T-cell (primary cell): ENCODE measurements at regions of chr9 and their contacts with region 1.

Region 1: DNA sequence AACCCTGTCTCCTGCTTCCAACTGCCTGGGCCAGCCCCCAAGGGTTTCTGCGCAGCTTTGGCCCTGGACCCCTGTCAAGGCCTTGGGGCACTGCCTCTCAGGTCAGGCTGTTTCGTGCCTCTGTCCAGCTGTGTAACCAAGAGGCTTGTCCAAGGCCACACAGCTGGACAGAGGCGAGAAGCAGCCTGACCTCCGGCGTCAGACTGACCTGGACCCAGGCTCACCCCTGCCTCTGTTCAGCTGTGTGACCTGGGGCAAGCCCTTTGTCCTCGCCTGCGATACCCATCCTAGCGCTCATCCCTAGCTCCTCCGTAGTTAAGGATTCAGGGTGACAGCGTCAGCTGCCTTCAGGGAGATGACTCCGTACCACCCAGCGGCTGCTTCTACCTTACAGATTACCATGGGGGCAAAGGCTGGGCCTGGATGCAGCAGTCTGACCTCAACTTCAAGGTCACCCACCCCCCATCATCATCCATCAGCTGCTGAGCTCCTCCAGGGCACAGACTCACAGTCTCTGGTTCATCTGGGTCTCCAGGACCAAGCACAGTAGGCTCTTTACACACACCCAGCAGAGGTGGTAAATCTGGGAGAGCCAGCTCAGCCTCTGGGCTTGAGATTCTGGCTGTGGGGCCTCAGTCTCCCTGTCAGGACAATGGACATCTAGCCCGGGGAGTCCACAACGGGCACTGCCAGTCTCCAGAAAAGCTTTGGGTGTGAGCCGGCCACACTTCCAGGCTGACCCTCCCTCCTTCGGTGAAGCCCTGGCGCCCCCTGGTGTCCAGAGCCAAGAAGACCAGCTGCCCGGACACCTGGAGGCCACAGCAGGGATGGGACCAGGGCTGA is 7.9 kb downstream of the AK1 start:
- DNase-seq: peak in 34 of 35 experiments; percentile 39 to 82 (median 60)
- ATAC-seq: peak; percentile 61 to 74 (median 70)
- H3K4me3 ChIP-seq: no peak overlapping the region
- H3K4me3 Mint-ChIP-seq: no peak overlapping the region
- H3K27ac ChIP-seq: no peak overlapping the region
- H3K27ac Mint-ChIP-seq: no peak overlapping the region
- H3K4me1 ChIP-seq: peaks cover 3 to 24% of the 10 kb centered on the region in 2 experiments
- H3K4me1 Mint-ChIP-seq: peaks cover 14 to 18% (median 18%) of the 10 kb centered on the region in 3 donors
- H3K27me3 ChIP-seq: no peaks in the 10 kb centered on the region
- H3K27me3 Mint-ChIP-seq: no peaks in the 10 kb centered on the region

Region 2: DNA sequence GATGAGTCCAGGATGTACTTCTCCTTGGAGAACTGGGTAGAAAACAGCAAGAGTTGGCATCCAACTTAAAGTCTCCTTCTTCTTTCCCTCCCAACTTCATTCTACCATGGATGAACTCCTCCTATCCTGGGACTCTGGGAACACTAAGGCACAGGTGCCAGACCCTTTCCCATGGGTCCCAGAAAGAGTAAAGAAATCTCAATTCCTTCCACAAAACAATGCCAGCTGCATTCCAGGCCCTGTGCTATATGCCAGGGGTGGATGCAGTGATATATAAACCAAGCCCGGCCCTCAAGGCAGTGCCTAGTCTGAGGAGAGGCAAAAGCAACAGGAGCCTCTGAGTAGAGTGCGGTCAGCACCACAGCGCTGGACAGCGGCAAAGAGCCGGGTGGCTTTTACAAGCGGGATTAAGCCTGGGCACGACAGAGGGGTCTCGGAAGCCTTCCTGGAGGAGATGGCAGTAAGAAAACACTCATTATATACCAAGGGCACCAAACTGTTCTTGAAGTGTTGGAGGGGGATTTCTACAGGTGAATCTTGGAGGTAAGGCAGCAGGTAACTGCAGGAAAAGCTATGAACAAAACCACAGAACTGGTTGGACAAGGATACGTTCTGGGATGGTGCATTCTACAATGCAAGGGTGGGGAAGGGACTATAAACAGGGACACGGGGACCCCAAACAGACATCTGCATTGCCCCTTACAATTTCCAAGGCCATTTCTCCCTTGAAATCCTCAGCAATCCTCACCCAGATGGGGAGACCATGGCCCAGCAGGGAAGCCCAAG is 118.1 kb before region 1 on chr9:
- CTCF ChIA-PET with region 1: no interaction called
- POLR2A ChIA-PET with region 1: no interaction called
- DNase-seq: no peak
- ATAC-seq: no peak
- H3K4me3 ChIP-seq: no peak overlapping the region
- H3K4me3 Mint-ChIP-seq: no peak overlapping the region
- H3K27ac ChIP-seq: no peak overlapping the region
- H3K27ac Mint-ChIP-seq: peak overlapping the region in 1 of 2 donors; percentile 52
- H3K4me1 ChIP-seq: peaks cover 0 to 16% of the 10 kb centered on the region in 2 experiments
- H3K4me1 Mint-ChIP-seq: peaks cover 26 to 30% (median 27%) of the 10 kb centered on the region in 3 donors
- H3K27me3 ChIP-seq: no peaks in the 10 kb centered on the region
- H3K27me3 Mint-ChIP-seq: no peaks in the 10 kb centered on the region

Region 3: GRCh38 chr9:127802576-127803443 is 66.7 kb before region 1 on chr9 and contains the start of gene FPGS:
- CTCF ChIA-PET with region 1: interaction called in 1 of 2 experiments, 14 read pairs
- POLR2A ChIA-PET with region 1: no interaction called
- DNase-seq: peak; percentile 64 to 89 (median 78)
- ATAC-seq: peak; percentile 86 to 90 (median 87)
- H3K4me3 ChIP-seq: peak within 1 kb of the TSS; percentile 84 to 91
- H3K4me3 Mint-ChIP-seq: peak within 1 kb of the TSS; percentile 92 to 95 (median 93)
- H3K27ac ChIP-seq: peak within 1 kb of the TSS; percentile 79
- H3K27ac Mint-ChIP-seq: peak within 1 kb of the TSS; percentile 89 to 93
- H3K4me1 ChIP-seq: peaks cover 4 to 30% of the 10 kb centered on the region in 2 experiments
- H3K4me1 Mint-ChIP-seq: peaks cover 19 to 31% (median 29%) of the 10 kb centered on the region in 3 donors
- H3K27me3 ChIP-seq: no peaks in the 10 kb centered on the region
- H3K27me3 Mint-ChIP-seq: no peaks in the 10 kb centered on the region
- total RNA-seq, gene FPGS: 78.4 to 151 (median 139) TPM

Region 4: DNA sequence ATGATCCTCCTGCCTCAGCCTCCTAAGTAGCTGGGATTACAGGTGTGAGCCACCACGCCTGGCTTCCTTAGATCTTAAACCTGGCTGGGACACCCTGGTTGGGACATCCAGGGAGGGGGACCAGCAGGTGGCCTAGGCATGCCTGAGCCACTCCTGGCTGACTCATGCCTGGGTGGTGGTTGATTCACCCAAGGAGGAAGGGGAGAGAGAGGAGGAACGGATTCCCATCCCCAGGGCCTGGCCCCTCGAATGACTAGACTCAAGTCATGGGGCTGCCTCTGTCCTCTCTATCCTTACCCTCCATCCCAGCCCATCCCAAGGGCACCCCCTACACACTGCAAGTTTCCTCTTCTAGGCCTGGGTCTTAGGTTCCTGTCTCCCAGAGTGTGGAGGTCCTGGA is 98.5 kb after region 1 on chr9:
- CTCF ChIA-PET with region 1: interaction called in 1 of 2 experiments, 10 read pairs
- POLR2A ChIA-PET with region 1: no interaction called
- DNase-seq: peak in 1 of 35 experiments; percentile 56
- ATAC-seq: no peak
- H3K4me3 ChIP-seq: peak overlapping the region in 1 of 2 donors; percentile 0
- H3K4me3 Mint-ChIP-seq: peak overlapping the region; percentile 91 to 97 (median 96)
- H3K27ac ChIP-seq: peak overlapping the region; percentile 79
- H3K27ac Mint-ChIP-seq: peak overlapping the region; percentile 88 to 99
- H3K4me1 ChIP-seq: peaks cover 64 to 99% of the 10 kb centered on the region in 2 experiments
- H3K4me1 Mint-ChIP-seq: peaks cover 96 to 97% (median 97%) of the 10 kb centered on the region in 3 donors
- H3K27me3 ChIP-seq: no peaks in the 10 kb centered on the region
- H3K27me3 Mint-ChIP-seq: no peaks in the 10 kb centered on the region